Activated CD4-positive, alpha-beta memory T cell treated with anti-CD3 and anti-CD28 coated beads for 36 hours (primary cell): ENCODE measurements at regions of chr17 and their contacts with region 1.

Region 1: DNA sequence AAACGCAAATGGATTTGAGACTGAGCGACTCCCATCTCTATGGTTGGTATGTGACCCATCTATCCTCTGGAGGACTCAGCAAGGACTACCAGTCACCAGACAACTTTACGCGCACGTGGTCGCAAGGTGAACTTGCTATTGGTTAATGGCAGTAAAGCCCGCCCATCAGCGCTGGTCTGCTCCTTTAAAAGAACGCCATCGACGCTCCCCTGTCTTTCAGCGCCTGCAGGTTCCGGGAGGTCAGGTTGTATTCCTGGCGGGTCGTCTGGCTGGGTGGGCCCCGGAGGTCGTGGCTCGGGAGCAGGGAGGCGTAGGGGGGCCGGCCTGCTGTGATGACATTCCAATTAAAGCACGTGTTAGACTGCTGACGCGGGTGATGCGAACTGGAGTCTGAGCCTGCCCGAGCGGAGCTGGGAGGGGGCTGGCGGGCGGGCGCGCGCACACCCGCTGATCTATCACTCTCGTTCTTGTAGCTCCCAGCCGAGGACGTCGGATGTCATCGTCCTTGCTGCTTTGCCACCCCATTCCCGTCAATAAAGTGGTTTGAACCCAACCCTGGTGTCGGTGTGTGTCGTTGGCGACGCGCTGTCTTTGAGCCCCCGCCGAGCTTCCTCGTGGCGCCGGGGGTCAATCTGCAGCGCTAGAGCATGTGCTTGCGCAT is 15.9 kb upstream of the ERN1 start:
- DNase-seq: peak; percentile 96
- H3K4me3 Mint-ChIP-seq: no peak overlapping the region
- H3K27ac Mint-ChIP-seq: no peak overlapping the region
- H3K4me1 Mint-ChIP-seq: peaks cover 23% of the 10 kb centered on the region
- H3K27me3 Mint-ChIP-seq: no peaks in the 10 kb centered on the region

Region 2: DNA sequence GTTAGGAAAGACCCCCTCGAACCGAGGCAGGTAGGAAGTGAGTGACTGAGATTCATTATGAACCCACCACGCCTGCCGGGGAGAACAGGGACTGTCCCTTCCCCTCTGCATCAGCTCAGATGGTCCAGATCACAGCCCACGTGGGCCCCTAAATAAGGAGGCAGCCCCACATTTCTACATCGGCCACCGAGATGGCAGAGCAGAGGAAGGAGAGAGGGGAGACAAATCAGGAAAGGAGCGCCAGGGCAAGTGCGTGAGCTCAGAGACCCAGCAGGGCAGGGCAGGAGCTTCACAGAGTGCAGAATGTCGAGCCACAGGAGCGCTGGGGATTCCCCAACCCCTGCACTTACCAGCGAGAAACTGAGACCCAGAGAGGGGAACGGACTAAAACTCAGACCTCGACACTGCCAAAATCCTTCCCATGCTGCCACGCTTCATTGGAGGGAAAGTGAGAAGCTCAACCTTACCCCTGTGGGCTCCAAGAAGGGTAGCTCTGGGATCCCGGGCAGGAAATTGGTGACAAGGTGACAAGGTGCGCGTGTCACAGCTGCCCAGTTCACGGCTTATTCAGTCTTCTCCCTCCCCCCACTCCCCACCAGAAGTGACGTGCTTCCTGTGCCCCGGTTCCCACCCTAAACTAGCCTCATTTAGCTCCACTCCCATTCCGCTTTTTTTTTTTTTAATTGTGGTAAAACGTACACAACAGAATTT is 125.7 kb before region 1 on chr17 and contains the start of gene ICAM2:
- CTCF ChIA-PET with region 1: interaction called, 9 read pairs
- POLR2A ChIA-PET with region 1: interaction called, 20 read pairs
- intact Hi-C with region 1: loop called (anchors 1 kb)
- DNase-seq: peak; percentile 95
- H3K4me3 Mint-ChIP-seq: peak within 1 kb of the TSS; percentile 93
- H3K27ac Mint-ChIP-seq: peak within 1 kb of the TSS; percentile 98
- H3K4me1 Mint-ChIP-seq: peaks cover 64% of the 10 kb centered on the region
- H3K27me3 Mint-ChIP-seq: no peaks in the 10 kb centered on the region
- total RNA-seq, gene ICAM2: 65.0 to 66.7 TPM

Region 3: DNA sequence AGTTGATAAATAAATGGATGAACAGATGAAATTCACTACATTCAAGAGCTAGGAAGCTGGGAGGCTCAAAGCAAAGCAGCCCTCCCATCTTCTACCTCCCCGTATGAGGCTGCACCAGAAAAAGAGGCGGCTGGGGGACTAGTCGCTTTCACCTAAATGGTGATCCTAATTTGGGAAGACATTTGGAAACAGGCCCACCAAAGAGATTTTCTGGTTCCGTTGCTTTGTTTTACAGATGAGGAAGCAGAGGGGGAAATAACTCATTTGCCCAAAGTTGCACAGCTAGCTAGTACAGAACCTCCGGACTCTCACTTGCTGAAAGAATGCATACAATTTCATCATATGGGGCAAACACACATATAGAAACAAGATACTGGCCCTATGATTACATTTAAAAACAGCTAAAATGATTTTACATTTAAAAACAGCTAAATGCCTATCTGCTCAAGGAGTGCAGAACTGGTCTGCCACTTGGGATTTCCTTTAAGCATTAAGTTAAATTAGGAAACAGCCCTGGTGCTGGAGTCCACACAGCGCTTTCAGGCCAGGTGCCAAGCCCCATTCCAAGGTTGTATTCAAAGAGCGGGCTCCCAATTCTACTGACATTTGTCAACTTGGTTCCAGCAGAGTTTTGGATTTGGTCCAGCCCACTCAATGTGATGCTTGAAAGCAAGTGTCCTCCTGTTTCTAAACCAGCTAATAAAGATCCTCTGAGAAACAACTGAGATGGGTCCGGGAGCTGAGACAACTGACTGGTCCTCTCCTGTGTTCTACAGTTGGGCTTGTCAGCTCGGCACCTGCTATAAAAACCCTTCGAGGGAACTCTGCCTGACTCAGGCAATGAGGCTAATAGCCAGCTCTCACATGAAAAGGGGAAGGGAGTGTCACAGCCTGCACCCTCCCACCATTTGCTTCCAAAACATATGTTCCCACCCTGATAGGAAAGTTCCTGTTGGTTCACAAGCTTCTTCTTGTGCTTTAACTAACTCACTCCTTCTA is 27.6 kb before region 1 on chr17:
- CTCF ChIA-PET with region 1: no interaction called
- POLR2A ChIA-PET with region 1: interaction called, 12 read pairs
- intact Hi-C with region 1: no loop called
- DNase-seq: no peak
- H3K4me3 Mint-ChIP-seq: no peak overlapping the region
- H3K27ac Mint-ChIP-seq: peak overlapping the region; percentile 71
- H3K4me1 Mint-ChIP-seq: peaks cover 78% of the 10 kb centered on the region
- H3K27me3 Mint-ChIP-seq: no peaks in the 10 kb centered on the region

Region 4: DNA sequence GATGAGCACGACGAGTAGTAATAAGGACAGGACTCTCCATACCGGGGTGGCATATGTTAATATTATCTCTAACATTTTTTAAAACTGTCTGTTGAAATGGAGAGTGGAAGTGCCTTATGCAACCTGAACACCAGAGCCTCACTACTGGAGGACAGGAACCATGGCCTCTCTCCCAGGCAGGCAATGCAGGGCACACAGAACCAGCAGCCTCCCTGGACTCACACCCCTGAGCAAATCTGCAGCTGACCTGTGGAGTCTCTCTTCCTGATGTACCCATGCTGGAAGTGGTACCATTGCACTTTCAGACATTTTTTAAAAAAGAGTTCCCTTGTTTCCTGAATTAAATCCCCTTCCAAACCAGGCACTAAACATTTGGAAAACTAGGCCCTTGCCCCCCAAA is 39.3 kb after region 1 on chr17:
- CTCF ChIA-PET with region 1: no interaction called
- POLR2A ChIA-PET with region 1: no interaction called
- intact Hi-C with region 1: loop called (anchors 1 kb)
- DNase-seq: no peak
- H3K4me3 Mint-ChIP-seq: no peak overlapping the region
- H3K27ac Mint-ChIP-seq: no peak overlapping the region
- H3K4me1 Mint-ChIP-seq: peaks cover 10% of the 10 kb centered on the region
- H3K27me3 Mint-ChIP-seq: no peaks in the 10 kb centered on the region

Region 5: GRCh38 chr17:64226132-64226531 is 80.2 kb after region 1 on chr17:
- CTCF ChIA-PET with region 1: no interaction called
- POLR2A ChIA-PET with region 1: no interaction called
- intact Hi-C with region 1: no loop called
- DNase-seq: no peak
- H3K4me3 Mint-ChIP-seq: no peak overlapping the region
- H3K27ac Mint-ChIP-seq: no peak overlapping the region
- H3K4me1 Mint-ChIP-seq: no peaks in the 10 kb centered on the region
- H3K27me3 Mint-ChIP-seq: no peaks in the 10 kb centered on the region

Region 6: DNA sequence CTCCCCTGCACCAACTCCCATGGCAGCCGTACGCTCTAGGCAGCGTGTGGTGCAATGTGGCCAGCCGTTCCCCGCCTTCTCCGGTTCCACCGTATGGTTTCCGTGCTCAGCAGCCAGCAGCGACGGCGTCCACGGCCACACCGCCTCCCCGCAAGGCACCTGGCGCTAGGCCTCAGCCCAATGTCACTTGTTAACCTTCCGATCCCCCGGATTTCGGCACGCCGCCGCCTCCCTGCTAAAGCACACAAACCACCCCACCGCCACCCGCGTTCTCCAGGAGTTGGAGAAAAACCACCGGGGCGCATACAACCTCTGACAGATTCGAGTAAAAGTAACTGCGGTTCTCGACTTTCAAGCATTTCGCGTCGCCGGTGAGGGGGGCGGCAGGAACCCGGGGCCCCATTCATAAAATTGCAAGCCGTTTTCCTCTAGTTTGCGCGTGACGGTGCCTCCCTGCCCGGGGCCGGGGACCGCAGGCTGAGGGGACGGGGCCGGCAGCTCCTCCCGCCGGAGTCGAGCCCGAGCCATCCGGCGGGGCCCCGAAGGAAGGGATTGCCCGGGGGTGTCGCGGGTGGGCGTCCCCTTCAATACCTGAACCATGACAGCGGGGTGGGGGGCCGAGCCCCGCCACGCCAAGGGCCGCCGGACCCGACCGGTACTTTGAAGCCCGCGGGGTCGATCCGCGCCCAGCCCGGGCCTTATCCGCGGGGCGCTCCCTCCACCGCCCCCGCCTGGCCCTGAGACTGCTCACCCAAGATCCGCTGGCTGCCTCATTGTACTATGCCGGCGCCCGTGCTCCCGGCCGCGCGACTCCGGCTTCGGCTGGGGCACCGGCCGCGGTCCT is 116.8 kb after region 1 on chr17 and contains the start of gene TEX2:
- CTCF ChIA-PET with region 1: no interaction called
- POLR2A ChIA-PET with region 1: interaction called, 24 read pairs
- intact Hi-C with region 1: loop called (anchors 1 kb)
- DNase-seq: peak; percentile 77
- H3K4me3 Mint-ChIP-seq: peak within 1 kb of the TSS; percentile 96
- H3K27ac Mint-ChIP-seq: peak within 1 kb of the TSS; percentile 91
- H3K4me1 Mint-ChIP-seq: peaks cover 32% of the 10 kb centered on the region
- H3K27me3 Mint-ChIP-seq: no peaks in the 10 kb centered on the region
- total RNA-seq, gene TEX2: 11.9 to 12.1 TPM

Region 7: DNA sequence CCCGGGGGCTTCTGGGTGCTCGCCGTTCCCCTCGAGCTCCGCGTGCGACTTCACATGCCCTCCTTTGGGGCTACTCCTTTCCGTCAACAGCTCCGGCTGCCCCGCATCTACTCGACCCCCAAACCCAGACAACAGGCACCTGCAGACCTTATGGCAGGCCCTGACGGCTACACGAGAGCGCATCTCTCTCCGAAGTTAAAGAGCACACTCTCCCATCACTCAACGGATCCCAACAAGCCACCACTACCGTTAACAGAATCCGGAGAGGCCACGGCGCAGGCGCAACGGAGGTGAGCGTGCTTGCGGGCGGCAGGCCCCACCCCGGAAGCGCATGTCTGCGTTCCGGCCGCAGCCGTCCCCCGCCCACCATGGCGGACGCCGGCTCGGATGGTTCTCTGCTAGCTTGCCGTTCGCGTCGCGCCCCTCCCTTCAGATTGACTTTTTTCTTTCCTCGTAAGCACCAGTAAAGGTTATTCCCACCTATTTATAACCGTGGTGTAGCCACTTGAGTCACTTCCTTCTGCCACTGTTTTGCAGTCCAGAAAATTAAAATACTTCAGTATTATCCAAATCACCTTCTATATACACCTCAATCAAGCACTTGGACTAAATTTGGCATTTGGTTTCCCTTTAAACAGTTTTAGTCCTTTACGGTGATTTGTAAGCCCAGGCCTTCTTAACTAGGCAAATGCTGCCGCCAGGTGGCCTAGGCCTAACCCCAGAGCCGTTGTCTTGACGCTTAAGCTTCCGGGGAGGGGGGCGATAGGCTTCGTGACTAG is 351.1 kb after region 1 on chr17 and contains the start of gene POLG2:
- CTCF ChIA-PET with region 1: no interaction called
- POLR2A ChIA-PET with region 1: interaction called, 3 read pairs
- intact Hi-C with region 1: loop called (anchors 5 kb)
- DNase-seq: peak; percentile 97
- H3K4me3 Mint-ChIP-seq: peak within 1 kb of the TSS; percentile 96
- H3K27ac Mint-ChIP-seq: peak within 1 kb of the TSS; percentile 93
- H3K4me1 Mint-ChIP-seq: peaks cover 74% of the 10 kb centered on the region
- H3K27me3 Mint-ChIP-seq: no peaks in the 10 kb centered on the region
- total RNA-seq, gene POLG2: 25.8 to 28.1 TPM